Endothelial cell of umbilical vein (primary cell): ENCODE measurements at regions of chr11 and their contacts with region 1.

Region 1: GRCh38 chr11:95150946-95151684 is 61.5 kb downstream of the ENDOD1 start:
- DNase-seq: peak; percentile 92
- H3K4me3 ChIP-seq: peak overlapping the region; percentile 9 to 39 (median 34)
- H3K27ac ChIP-seq: peak overlapping the region; percentile 62
- H3K4me1 ChIP-seq: peaks cover 36% of the 10 kb centered on the region
- H3K27me3 ChIP-seq: no peaks in the 10 kb centered on the region
- CTCF ChIP-seq: peak; percentile 73 to 84
- POLR2A ChIP-seq: no peak

Region 2: DNA sequence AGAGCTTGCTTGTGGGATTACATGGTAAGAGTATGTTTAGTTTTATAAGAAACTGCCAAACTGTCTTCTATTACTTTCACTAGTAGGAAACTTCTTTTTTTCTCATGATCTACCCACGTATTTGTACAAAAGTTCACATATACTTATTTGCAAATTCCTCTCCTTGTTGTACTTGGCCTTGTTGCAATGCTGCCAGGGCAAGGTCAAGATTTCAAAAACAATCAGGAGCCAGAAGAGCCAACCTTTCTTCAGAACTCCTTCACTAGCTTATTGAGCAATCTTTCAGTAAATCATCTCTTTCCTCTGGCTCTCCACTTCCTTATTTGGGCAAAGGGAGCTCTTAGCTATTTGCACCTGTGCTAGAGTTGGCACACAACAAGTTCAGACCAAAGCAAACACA is 74.7 kb before region 1 on chr11:
- CTCF ChIA-PET with region 1: interaction called, 96 read pairs
- POLR2A ChIA-PET with region 1: no interaction called
- dilution Hi-C with region 1: no loop called
- intact Hi-C with region 1: no loop called
- DNase-seq: peak; percentile 90
- H3K4me3 ChIP-seq: no peak overlapping the region
- H3K27ac ChIP-seq: no peak overlapping the region
- H3K4me1 ChIP-seq: peaks cover 13% of the 10 kb centered on the region
- H3K27me3 ChIP-seq: no peaks in the 10 kb centered on the region
- CTCF ChIP-seq: no peak
- POLR2A ChIP-seq: no peak

Region 3: GRCh38 chr11:95108159-95108611 is 42.9 kb before region 1 on chr11:
- CTCF ChIA-PET with region 1: interaction called, 15 read pairs
- POLR2A ChIA-PET with region 1: interaction called, 4 read pairs
- dilution Hi-C with region 1: no loop called
- intact Hi-C with region 1: loop called (anchors 1 kb)
- DNase-seq: peak; percentile 90
- H3K4me3 ChIP-seq: peak overlapping the region in 1 of 3 experiments; percentile 5
- H3K27ac ChIP-seq: peak overlapping the region; percentile 76
- H3K4me1 ChIP-seq: peaks cover 28% of the 10 kb centered on the region
- H3K27me3 ChIP-seq: no peaks in the 10 kb centered on the region
- CTCF ChIP-seq: no peak
- POLR2A ChIP-seq: peak; percentile 31

Region 4: GRCh38 chr11:95364324-95365295 is 213.5 kb after region 1 on chr11:
- CTCF ChIA-PET with region 1: no interaction called
- POLR2A ChIA-PET with region 1: no interaction called
- dilution Hi-C with region 1: no loop called
- intact Hi-C with region 1: loop called (anchors 10 kb)
- DNase-seq: no peak
- H3K4me3 ChIP-seq: no peak overlapping the region
- H3K27ac ChIP-seq: no peak overlapping the region
- H3K4me1 ChIP-seq: no peaks in the 10 kb centered on the region
- H3K27me3 ChIP-seq: no peaks in the 10 kb centered on the region
- CTCF ChIP-seq: no peak
- POLR2A ChIP-seq: no peak

Region 5: DNA sequence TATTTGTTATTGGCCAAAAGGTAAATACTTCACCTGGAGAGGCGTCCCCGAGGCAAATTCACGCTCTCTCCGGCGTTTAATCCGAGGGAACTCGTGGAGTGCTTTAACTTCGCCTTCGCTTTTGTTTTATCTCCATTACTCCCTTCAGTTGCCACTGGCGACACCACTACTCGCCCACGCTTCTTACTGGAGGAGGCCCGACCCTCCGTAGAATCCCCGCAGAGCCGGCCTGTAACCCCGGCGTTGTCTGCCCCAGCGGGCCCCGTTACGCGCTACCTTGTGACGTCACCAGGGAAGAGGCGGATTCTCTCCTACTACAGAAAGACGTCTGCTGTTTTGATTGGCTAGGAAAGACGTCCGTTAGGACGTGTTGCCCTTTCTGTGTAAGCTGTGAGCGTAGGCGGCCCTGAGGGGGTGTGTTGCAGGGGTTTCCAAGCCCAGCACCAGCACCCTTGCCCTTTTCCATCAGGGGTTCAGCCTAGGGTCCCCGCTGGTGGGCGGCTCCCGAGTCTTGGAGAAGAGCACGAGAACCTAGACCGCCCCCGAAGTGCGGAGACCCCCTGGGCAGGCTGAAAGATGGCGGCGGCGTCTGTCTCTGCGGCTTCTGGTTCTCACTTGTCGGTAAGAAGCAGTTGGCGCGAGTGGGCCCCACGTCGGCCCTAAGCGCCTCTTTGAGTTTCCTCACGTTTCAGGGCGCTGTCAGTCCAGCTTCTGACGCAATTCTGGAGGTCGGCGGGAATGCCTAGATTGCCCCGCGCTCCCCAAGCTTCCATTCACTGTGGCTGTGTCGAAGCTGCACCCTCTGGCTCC is 639.2 kb after region 1 on chr11 and contains the start of gene CEP57:
- CTCF ChIA-PET with region 1: interaction called, 6 read pairs
- POLR2A ChIA-PET with region 1: no interaction called
- dilution Hi-C with region 1: no loop called
- intact Hi-C with region 1: loop called (anchors 1 kb)
- DNase-seq: peak; percentile 97
- H3K4me3 ChIP-seq: peak within 1 kb of the TSS; percentile 75 to 85 (median 84)
- H3K27ac ChIP-seq: peak within 1 kb of the TSS; percentile 90
- H3K4me1 ChIP-seq: peaks cover 21% of the 10 kb centered on the region
- H3K27me3 ChIP-seq: no peaks in the 10 kb centered on the region
- CTCF ChIP-seq: no peak
- POLR2A ChIP-seq: peak; percentile 79
- total RNA-seq, gene CEP57: 35.2 and 38.5 TPM in 2 replicates